Mammary epithelial cell (primary cell): ENCODE measurements at regions of chr3 and their contacts with region 1.

Region 1: GRCh38 chr3:45037734-45038455 is 11.8 kb downstream of the CLEC3B start:
- DNase-seq: peak; percentile 92
- H3K4me3 ChIP-seq: no peak overlapping the region
- H3K27ac ChIP-seq: peak overlapping the region; percentile 33
- H3K4me1 ChIP-seq: peaks cover 21% of the 10 kb centered on the region
- H3K27me3 ChIP-seq: no peaks in the 10 kb centered on the region
- CTCF ChIP-seq: peak; percentile 98

Region 2: DNA sequence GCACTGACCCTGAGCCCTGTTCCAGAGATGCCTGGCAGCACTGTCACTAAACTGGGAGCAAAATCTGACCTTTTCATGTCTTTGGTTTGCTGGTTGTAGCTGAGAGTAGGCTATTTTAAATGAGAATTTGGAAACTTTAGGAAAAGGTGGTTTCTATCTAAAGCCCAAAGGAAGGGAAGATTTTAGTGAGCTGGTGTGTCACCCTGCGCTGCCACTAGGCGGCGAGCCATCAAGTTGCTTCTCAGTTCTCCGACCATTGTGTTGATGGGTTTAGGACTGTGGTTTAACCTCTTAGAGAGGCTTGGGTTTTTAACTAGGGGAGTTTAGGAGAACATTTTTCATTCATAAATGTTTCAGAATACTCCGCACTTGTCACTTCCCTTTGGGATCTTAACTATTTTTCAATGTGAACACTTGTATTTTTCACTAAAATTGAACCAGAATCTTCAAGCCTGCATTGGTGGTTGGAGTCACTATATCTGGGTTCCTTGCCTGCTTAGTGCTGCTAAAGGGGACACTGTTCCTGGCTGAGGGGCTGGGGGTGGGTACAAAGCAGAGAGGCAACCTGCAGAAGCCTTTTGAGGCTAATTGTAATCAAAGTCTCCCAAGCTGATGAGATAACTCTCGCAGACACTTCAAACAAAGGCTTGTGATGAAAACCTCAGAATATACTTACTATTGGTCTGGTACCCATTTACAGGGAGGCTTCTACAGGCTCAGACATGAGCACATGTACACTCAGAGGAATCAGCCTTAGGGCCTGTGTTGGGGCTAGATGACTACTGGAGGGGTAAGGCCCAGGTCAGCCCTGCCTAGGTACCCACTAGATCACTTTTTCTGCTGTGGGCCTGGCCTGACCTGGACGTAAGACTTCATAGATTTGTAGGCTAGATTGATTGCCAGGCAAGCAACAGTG is 45.1 kb before region 1 on chr3:
- CTCF ChIA-PET with region 1: interaction called, 14 read pairs
- dilution Hi-C with region 1: no loop called
- in situ Hi-C with region 1: no loop called
- intact Hi-C with region 1: no loop called
- DNase-seq: peak; percentile 96
- H3K4me3 ChIP-seq: no peak overlapping the region
- H3K27ac ChIP-seq: peak overlapping the region; percentile 92
- H3K4me1 ChIP-seq: peaks cover 54% of the 10 kb centered on the region
- H3K27me3 ChIP-seq: no peaks in the 10 kb centered on the region
- CTCF ChIP-seq: peak; percentile 79 to 93

Region 3: GRCh38 chr3:45100981-45101407 is 63.1 kb after region 1 on chr3:
- CTCF ChIA-PET with region 1: no interaction called
- dilution Hi-C with region 1: no loop called
- in situ Hi-C with region 1: no loop called
- intact Hi-C with region 1: no loop called
- DNase-seq: no peak
- H3K4me3 ChIP-seq: no peak overlapping the region
- H3K27ac ChIP-seq: no peak overlapping the region
- H3K4me1 ChIP-seq: peaks cover 20% of the 10 kb centered on the region
- H3K27me3 ChIP-seq: no peaks in the 10 kb centered on the region
- CTCF ChIP-seq: no peak

Region 4: DNA sequence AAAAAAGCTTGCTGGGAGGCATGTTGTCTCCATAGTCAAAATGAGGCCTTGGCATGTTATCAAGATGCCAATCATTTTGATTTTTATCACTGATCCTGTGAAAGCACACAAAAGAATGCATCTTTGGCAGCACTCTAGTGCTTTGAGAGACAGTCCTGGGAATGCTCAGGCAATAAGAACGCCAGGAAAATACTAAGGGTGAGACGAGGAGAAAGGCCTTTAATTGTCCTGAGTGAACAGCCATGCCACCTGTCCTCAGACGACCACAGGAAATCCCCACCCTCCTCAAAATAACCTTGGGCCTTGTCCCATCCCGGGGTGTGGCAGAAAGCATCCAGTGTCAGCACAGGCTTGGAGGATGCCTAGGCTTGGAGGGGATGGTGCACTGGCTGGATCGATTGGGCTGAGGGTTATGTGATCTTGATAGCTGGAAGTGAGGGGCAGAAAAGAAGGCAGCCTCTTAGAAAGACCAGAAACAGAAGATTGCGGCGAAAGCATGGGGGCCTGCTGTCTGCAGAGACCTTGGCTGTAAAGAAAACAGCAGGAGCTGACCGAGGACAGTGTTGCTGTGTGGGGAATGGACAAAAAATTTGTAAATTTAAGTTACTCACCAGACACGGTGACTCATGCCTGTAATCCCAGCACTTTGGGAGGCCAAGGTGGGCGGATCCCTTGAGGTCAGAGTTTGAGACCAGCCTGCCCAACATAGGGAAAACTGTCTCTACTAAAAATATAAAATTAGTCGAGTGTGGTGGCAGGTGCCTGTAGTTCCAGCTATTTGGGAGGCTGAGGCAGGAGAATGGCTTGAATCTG is 180.9 kb after region 1 on chr3:
- CTCF ChIA-PET with region 1: no interaction called
- dilution Hi-C with region 1: loop called (anchors 5 kb)
- in situ Hi-C with region 1: loop called in 1 of 2 experiments (anchors 5 kb)
- intact Hi-C with region 1: no loop called
- DNase-seq: peak; percentile 64
- H3K4me3 ChIP-seq: no peak overlapping the region
- H3K27ac ChIP-seq: no peak overlapping the region
- H3K4me1 ChIP-seq: peaks cover 22% of the 10 kb centered on the region
- H3K27me3 ChIP-seq: no peaks in the 10 kb centered on the region
- CTCF ChIP-seq: no peak

Region 5: GRCh38 chr3:45507820-45508317 is 470.0 kb after region 1 on chr3:
- CTCF ChIA-PET with region 1: no interaction called
- dilution Hi-C with region 1: no loop called
- in situ Hi-C with region 1: no loop called
- intact Hi-C with region 1: loop called (anchors 1 kb)
- DNase-seq: no peak
- H3K4me3 ChIP-seq: no peak overlapping the region
- H3K27ac ChIP-seq: no peak overlapping the region
- H3K4me1 ChIP-seq: peaks cover 10% of the 10 kb centered on the region
- H3K27me3 ChIP-seq: no peaks in the 10 kb centered on the region
- CTCF ChIP-seq: no peak

Region 6: GRCh38 chr3:45760878-45761711 is 723.2 kb after region 1 on chr3:
- CTCF ChIA-PET with region 1: no interaction called
- dilution Hi-C with region 1: no loop called
- in situ Hi-C with region 1: no loop called
- intact Hi-C with region 1: loop called (anchors 5 kb)
- DNase-seq: peak; percentile 26
- H3K4me3 ChIP-seq: no peak overlapping the region
- H3K27ac ChIP-seq: no peak overlapping the region
- H3K4me1 ChIP-seq: no peaks in the 10 kb centered on the region
- H3K27me3 ChIP-seq: no peaks in the 10 kb centered on the region
- CTCF ChIP-seq: peak; percentile 81 to 90

Region 7: GRCh38 chr3:46078712-46079400 is 1041.0 kb after region 1 on chr3:
- CTCF ChIA-PET with region 1: no interaction called
- dilution Hi-C with region 1: no loop called
- in situ Hi-C with region 1: no loop called
- intact Hi-C with region 1: loop called (anchors 1 kb)
- DNase-seq: peak; percentile 80
- H3K4me3 ChIP-seq: no peak overlapping the region
- H3K27ac ChIP-seq: no peak overlapping the region
- H3K4me1 ChIP-seq: peaks cover 26% of the 10 kb centered on the region
- H3K27me3 ChIP-seq: no peaks in the 10 kb centered on the region
- CTCF ChIP-seq: peak; percentile 98